ENCODE measurements at regions of chr6 and their contacts with region 1.

Region 1: DNA sequence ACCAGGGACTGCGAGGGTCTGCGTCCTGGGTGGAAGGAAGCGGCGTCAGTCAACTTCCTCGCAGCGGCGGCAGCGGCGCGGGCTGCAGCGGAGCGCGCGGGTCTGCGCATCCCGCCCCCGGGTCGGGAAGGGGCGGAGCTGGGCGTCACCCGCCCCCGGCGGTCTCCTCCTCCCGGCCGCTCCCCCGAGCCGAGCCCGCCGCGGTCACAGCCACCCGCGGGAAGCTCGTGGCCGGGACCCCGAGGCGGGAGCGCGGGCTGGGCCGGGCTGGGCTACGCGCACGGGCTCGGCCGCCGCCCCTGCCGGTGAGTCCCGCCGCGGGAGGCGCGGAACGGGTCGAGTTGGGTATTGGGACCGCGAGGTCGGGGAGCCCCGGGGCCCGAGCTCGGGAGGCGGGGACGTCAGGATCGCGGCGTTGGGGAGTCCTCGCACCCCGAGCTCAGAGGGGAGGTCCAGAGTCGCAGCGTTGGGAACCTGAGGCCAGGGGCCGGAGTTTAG is at the start of gene PAQR8:
- DNase-seq: peak; percentile 86
- H3K4me3 ChIP-seq: peak within 1 kb of the TSS; percentile 82 to 97 (median 92)
- H3K27ac ChIP-seq: peak within 1 kb of the TSS; percentile 91 to 94 (median 92)
- H3K4me1 ChIP-seq: peaks cover 0 to 59% (median 21%) of the 10 kb centered on the region in 4 donors
- H3K27me3 ChIP-seq: no peaks in the 10 kb centered on the region
- CTCF ChIP-seq: no peak
- EP300 ChIP-seq: no peak
- POLR2A ChIP-seq: no peak
- total RNA-seq, gene PAQR8: 27.1 to 250 (median 159) TPM

Region 2: GRCh38 chr6:53825532-53826321 is 1463.7 kb after region 1 on chr6:
- in situ Hi-C with region 1: no loop called
- intact Hi-C with region 1: loop called (anchors 10 kb)
- DNase-seq: no peak
- H3K4me3 ChIP-seq: peak overlapping the region in 1 of 4 donors; percentile 3
- H3K27ac ChIP-seq: peak overlapping the region; percentile 71 to 79 (median 76)
- H3K4me1 ChIP-seq: peaks cover 46 to 68% (median 61%) of the 10 kb centered on the region in 4 donors
- H3K27me3 ChIP-seq: no peaks in the 10 kb centered on the region
- CTCF ChIP-seq: no peak
- EP300 ChIP-seq: no peak
- POLR2A ChIP-seq: no peak